ENCODE measurements at regions of chr20 and their contacts with region 1.

Region 1: DNA sequence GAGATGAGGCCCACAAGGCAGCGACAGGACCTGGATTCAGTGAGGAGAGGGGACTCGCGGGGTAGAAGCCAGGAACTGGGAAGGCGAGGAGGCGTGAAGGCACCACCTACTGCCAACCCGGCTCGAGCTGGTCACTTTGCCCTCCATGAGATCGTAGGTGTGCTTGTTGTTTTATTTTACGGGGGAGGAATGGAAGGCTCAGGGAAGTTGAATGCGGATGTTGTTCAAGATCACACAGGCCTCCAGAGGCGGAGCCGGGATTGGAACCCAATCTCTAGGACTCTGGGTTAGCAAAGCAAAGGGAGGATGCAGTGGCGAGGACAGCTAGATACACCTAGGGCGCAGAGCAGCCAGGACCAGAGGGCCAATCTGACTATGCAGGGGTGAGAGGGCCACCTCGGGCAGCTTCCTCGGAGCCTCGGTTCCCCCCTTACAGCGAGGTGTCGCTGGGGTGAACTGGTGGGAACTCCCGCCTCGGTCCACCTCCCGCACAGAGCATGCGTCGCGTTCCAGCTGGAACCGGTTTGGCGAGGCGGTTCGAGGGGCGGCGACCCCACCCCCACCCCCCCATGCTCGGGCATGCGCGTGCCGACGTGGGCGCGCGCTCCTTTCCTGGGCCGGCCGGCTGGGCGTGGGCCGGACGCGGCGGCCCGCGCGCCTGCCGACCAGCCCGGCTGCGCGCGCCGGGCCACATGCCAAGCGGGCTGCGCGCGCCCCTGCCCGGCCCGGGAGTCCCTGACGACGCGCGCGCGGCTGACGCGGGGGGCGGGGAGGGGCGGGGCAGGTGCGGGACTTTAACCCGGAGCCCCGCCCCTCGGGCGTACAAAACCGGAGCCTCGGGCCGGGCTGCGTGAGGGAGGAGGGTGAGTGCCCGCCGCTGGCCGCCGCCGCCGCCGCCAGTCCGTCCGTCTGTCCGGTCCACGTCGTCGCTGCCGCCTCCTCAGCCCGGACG is 80.4 kb upstream of the MYL9 start:
- DNase-seq: peak; percentile 97
- ATAC-seq: peak; percentile 80
- H3K4me3 ChIP-seq: peak overlapping the region; percentile 40 to 79 (median 47)
- H3K4me3 Mint-ChIP-seq: peak overlapping the region; percentile 81
- H3K27ac ChIP-seq: peak overlapping the region; percentile 96 to 98
- H3K27ac Mint-ChIP-seq: peak overlapping the region; percentile 91
- H3K4me1 ChIP-seq: peaks cover 42 to 49% of the 10 kb centered on the region in 2 donors
- H3K4me1 Mint-ChIP-seq: peaks cover 46% of the 10 kb centered on the region
- H3K27me3 ChIP-seq: no peaks in the 10 kb centered on the region
- H3K27me3 Mint-ChIP-seq: no peaks in the 10 kb centered on the region
- CTCF ChIP-seq: no peak

Region 2: DNA sequence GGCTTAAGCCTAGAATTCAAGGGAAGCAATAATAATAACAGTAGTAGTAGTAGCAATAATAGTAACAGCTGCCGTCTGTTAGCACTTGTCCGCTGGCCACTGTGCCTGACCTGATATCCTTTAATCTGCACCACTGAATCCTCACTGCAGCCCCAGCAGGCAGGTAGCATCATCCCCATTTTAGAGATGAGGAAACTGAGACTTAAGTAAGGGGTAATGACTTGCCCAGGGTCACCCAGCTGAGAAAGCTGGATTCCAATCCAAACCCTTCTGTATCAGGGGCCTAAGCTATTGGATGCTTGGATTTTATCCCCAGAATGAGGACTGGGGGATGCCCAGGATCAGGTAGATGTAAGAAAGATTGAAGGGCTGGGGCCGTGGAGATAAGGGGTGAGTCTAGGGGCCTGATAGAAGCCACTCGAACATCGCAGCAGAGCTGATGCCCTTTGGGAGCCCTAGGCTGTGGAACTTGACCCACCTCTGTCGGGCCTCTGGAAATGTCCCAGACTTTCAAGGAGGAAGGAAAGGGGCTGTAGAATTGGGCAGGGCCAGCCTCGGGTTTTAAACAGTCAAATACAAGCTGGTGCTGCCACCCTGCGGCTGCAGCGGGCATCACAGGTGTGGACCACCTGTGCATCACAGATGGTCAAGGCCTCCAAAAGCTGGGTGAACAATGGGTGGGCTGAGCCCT is 21.7 kb before region 1 on chr20:
- CTCF ChIA-PET with region 1: interaction called, 3 read pairs
- POLR2A ChIA-PET with region 1: no interaction called
- intact Hi-C with region 1: loop called (anchors 2 kb)
- DNase-seq: peak; percentile 68
- ATAC-seq: peak; percentile 32
- H3K4me3 ChIP-seq: no peak overlapping the region
- H3K4me3 Mint-ChIP-seq: no peak overlapping the region
- H3K27ac ChIP-seq: no peak overlapping the region
- H3K27ac Mint-ChIP-seq: no peak overlapping the region
- H3K4me1 ChIP-seq: peaks cover 0 to 11% of the 10 kb centered on the region in 2 donors
- H3K4me1 Mint-ChIP-seq: peaks cover 9% of the 10 kb centered on the region
- H3K27me3 ChIP-seq: peaks cover 0 to 12% (median 0%) of the 10 kb centered on the region in 4 experiments
- H3K27me3 Mint-ChIP-seq: peaks cover 4% of the 10 kb centered on the region
- CTCF ChIP-seq: peak; percentile 84

Region 3: GRCh38 chr20:36481381-36482043 is 20.6 kb after region 1 on chr20:
- CTCF ChIA-PET with region 1: no interaction called
- POLR2A ChIA-PET with region 1: no interaction called
- intact Hi-C with region 1: no loop called
- DNase-seq: no peak
- ATAC-seq: no peak
- H3K4me3 ChIP-seq: no peak overlapping the region
- H3K4me3 Mint-ChIP-seq: no peak overlapping the region
- H3K27ac ChIP-seq: no peak overlapping the region
- H3K27ac Mint-ChIP-seq: no peak overlapping the region
- H3K4me1 ChIP-seq: peaks cover 0 to 11% of the 10 kb centered on the region in 2 donors
- H3K4me1 Mint-ChIP-seq: peaks cover 35% of the 10 kb centered on the region
- H3K27me3 ChIP-seq: no peaks in the 10 kb centered on the region
- H3K27me3 Mint-ChIP-seq: no peaks in the 10 kb centered on the region
- CTCF ChIP-seq: no peak

Region 4: DNA sequence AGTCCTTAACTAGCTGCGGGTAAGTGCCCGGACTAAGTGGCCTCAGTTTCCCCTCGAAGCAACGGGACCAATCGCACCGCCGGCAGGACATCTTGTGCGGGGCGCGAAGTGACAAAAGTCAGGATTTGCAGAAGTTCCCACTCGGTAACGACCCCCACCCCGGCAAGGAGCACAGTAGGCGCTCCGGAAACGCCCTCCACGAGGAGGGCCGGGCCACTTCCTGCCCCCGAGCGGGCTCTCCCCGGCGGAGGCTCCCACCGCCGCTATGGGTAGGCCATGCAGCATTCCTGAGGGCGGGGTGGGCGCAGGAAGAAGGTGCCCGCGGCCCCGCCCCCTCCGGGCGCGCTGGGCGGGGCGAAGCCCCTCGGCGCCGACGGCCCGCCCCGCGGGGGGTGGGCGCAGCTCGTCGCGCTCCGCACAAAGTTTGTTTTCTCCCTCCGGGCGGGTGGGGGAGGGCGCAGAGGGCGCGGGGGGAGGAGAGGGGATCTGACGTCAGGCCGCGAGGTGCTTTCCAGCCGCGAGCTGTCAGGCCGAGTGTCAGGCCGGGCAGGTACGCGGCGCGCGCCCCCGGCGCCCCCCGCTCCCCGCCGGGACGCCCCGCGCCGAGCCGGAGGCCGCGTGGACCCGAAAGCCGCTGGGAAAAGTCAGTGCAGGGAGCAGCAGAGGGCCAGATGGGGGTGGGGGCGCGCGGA is 112.3 kb after region 1 on chr20 and contains the start of gene TGIF2:
- CTCF ChIA-PET with region 1: no interaction called
- POLR2A ChIA-PET with region 1: interaction called, 3 read pairs
- intact Hi-C with region 1: loop called (anchors 1 kb)
- DNase-seq: peak; percentile 94
- ATAC-seq: peak; percentile 80
- H3K4me3 ChIP-seq: peak within 1 kb of the TSS; percentile 22 to 95 (median 88)
- H3K4me3 Mint-ChIP-seq: peak within 1 kb of the TSS; percentile 92
- H3K27ac ChIP-seq: peak within 1 kb of the TSS; percentile 97 to 100
- H3K27ac Mint-ChIP-seq: peak within 1 kb of the TSS; percentile 98
- H3K4me1 ChIP-seq: peaks cover 23 to 34% of the 10 kb centered on the region in 2 donors
- H3K4me1 Mint-ChIP-seq: peaks cover 34% of the 10 kb centered on the region
- H3K27me3 ChIP-seq: no peaks in the 10 kb centered on the region
- H3K27me3 Mint-ChIP-seq: no peaks in the 10 kb centered on the region
- CTCF ChIP-seq: no peak
- total RNA-seq, gene TGIF2: 45.6 and 46.1 TPM in 2 replicates

Region 5: DNA sequence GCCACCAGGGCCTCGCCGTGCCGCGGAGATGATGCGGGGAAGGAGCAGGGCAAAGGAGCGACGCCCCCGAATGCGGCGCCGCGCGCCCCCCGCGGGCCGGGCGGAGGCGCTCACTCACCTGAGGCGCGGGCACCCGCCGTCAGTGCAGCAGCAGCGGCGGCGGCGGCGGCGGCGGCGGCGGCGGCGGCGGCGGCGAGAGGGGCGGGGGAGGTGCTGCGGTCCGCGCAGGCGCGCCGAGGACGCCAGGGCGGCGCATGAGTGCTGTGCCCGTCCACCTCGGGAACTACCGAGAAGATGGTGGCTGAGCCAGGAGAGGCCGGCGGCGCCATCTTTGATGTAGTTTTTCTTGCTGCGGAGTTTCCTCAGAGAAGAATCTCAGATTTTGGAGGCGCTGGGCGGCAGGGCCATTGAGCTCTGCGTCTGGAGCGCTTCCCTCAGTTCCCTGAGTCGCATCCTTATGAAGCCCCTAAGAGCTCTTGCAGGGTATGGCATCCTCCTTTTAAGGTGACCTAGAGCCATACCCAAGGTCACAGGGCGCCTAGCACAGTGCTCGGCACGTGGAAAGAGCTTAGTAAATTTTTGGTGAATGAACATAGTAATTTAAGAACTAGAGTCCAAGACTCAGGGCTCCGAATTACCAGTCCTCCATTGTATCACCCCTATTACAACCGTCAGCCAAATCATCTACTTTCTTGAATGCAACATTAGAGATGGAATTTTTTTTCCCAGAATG is 285.2 kb after region 1 on chr20 and contains the start of gene NDRG3:
- CTCF ChIA-PET with region 1: no interaction called
- POLR2A ChIA-PET with region 1: no interaction called
- intact Hi-C with region 1: loop called (anchors 2 kb)
- DNase-seq: peak; percentile 96
- ATAC-seq: peak; percentile 97
- H3K4me3 ChIP-seq: peak within 1 kb of the TSS; percentile 55 to 87 (median 74)
- H3K4me3 Mint-ChIP-seq: peak within 1 kb of the TSS; percentile 91
- H3K27ac ChIP-seq: peak within 1 kb of the TSS; percentile 50 to 79
- H3K27ac Mint-ChIP-seq: peak within 1 kb of the TSS; percentile 93
- H3K4me1 ChIP-seq: peaks cover 12 to 13% of the 10 kb centered on the region in 2 donors
- H3K4me1 Mint-ChIP-seq: peaks cover 21% of the 10 kb centered on the region
- H3K27me3 ChIP-seq: no peaks in the 10 kb centered on the region
- H3K27me3 Mint-ChIP-seq: no peaks in the 10 kb centered on the region
- CTCF ChIP-seq: peak; percentile 26
- total RNA-seq, gene NDRG3: 26.1 and 27.5 TPM in 2 replicates

Region 6: DNA sequence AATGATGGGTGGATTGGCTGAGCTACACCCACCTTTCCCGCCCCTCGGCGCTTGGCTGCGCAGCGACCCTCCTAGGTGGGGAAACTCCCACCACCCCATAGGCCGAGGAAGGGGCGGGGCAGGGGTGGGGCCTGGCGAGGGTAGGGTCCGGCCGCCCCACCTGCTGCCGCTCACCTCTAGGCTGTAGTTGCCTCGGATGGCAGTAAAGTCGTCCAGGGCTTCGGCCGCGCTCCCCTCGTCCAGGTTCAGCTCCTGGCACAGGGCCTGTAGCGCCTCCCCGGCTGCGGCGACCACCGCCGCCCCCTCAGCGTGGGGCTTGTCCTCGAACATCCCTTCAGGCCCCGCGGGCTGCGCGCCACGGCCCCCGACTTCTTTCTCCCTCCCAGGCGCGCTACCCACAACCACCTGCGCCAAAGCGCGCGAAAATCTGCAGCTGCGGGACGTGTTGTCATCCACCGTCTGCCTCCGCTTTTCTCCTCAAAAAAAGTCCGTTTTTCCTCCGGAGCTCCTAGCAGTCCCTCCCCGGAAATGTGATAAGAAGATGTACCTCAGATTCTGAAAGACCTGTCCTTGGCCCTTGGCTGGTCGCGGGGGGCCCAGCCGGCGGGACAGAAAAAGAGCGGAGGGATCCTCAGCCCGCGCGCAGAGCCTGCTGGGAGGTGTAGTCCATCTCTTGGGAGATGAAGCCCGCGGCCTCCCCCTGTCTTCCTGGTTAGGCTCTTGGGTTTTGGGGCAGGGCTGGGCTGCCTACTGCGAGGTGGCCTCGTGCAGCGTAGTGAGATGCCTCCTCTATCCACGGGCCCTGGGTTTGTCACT is 634.9 kb after region 1 on chr20 and contains the start of gene RBL1:
- CTCF ChIA-PET with region 1: no interaction called
- POLR2A ChIA-PET with region 1: no interaction called
- intact Hi-C with region 1: loop called (anchors 10 kb)
- DNase-seq: peak; percentile 96
- ATAC-seq: peak; percentile 86
- H3K4me3 ChIP-seq: peak within 1 kb of the TSS; percentile 62 to 77 (median 73)
- H3K4me3 Mint-ChIP-seq: peak within 1 kb of the TSS; percentile 98
- H3K27ac ChIP-seq: peak within 1 kb of the TSS; percentile 88 to 95
- H3K27ac Mint-ChIP-seq: peak within 1 kb of the TSS; percentile 100
- H3K4me1 ChIP-seq: peaks cover 13 to 28% of the 10 kb centered on the region in 2 donors
- H3K4me1 Mint-ChIP-seq: peaks cover 29% of the 10 kb centered on the region
- H3K27me3 ChIP-seq: no peaks in the 10 kb centered on the region
- H3K27me3 Mint-ChIP-seq: no peaks in the 10 kb centered on the region
- CTCF ChIP-seq: peak; percentile 13
- total RNA-seq, gene RBL1: 25.5 and 27.8 TPM in 2 replicates

Measured in B cell (primary cell).